ENCODE measurements at regions of chr15 and their contacts with region 1.

Region 1: DNA sequence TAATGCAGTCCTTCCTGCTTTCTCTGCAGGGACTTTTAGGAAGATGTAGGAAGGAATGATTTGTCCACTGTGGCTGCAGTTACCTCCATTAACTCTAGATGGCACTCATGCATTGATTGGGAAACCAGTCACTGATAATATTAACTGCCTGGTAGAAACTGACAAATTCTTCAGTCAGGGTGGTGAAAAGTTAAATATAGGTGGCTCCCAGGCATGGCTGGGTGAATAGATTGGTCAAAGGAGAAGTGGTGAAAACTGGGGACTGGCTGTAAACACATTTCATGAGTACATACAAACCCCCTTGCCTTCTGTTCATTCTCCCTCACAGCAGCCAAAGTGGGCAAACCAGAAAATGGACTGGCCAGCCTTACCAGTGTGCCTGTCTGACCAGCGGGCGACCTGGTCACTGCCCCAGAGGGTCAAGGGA is 333.4 kb downstream of the THSD4 start:
- DNase-seq: peak; percentile 48 to 61
- H3K4me3 ChIP-seq: no peak overlapping the region
- H3K27ac ChIP-seq: peak overlapping the region in 1 of 2 donors; percentile 50
- H3K4me1 ChIP-seq: no peaks in the 10 kb centered on the region
- H3K27me3 ChIP-seq: no peaks in the 10 kb centered on the region
- CTCF ChIP-seq: peak; percentile 87 to 97 (median 90)
- POLR2A ChIP-seq: no peak

Region 2: DNA sequence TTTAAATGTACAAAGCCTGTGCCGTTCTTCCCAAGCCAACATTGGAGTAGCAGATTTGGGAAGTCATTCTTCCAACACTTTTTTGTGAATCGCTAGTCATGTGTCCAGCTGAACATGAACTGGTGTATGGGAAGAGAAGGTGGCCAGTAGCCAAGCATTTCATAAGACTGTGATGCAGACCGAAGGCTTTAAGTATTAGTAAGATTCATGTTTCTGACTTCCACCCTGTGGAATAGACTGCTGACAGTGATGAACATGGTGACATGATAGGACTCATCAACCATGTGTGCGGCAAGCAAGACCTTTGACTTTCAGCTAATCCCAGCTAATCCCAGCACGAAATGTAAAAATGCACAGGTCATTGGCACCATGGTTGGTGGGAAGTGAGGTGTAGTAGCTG is 381.7 kb before region 1 on chr15:
- intact Hi-C with region 1: no loop called
- DNase-seq: peak; percentile 34 to 53
- H3K4me3 ChIP-seq: no peak overlapping the region
- H3K27ac ChIP-seq: no peak overlapping the region
- H3K4me1 ChIP-seq: no peaks in the 10 kb centered on the region
- H3K27me3 ChIP-seq: no peaks in the 10 kb centered on the region
- CTCF ChIP-seq: no peak
- POLR2A ChIP-seq: no peak

Region 3: DNA sequence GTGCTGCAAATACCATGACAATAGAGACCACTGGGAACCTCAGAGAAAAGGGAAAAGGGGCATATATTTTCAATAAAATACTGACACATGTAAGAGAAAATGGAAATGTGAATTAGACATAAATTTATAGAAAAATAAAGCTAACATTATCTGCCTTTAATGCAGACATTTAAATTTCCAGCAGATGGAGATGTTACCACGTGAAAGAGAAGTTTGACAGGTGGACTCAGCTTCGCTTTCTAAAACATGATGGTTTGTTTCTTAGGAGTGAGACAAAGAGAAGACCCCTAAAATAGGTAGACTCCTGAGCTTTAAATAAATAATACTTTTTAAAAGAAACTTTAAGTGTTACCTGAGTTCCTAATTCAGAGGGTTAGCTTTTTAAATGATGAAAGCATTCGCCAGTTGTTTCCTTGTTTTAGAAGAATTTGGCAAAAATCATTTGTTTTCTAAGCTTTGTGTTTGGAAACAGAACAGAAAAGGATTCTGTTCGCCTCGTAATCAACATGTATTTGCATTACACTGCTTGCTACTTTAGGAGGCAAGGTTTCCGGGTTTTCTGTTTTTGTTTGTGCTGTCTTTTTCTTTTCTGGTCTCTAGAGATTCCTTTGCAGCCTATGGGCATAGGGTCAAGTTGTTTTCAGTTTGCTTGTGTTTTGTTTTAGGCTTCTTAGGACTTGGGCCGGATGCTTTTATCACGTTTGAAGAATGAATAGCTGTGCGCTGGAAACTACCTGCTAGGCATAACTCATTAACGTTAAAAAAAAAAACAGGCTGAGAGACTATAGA is 62.1 kb before region 1 on chr15:
- intact Hi-C with region 1: loop called (anchors 10 kb)
- DNase-seq: no peak
- H3K4me3 ChIP-seq: peak overlapping the region in 1 of 2 donors; percentile 6
- H3K27ac ChIP-seq: peak overlapping the region; percentile 67 to 76
- H3K4me1 ChIP-seq: peaks cover 9 to 13% of the 10 kb centered on the region in 2 donors
- H3K27me3 ChIP-seq: no peaks in the 10 kb centered on the region
- CTCF ChIP-seq: peak; percentile 47 to 75 (median 67)
- POLR2A ChIP-seq: no peak

Region 4: GRCh38 chr15:71596672-71597071 is 148.0 kb after region 1 on chr15:
- intact Hi-C with region 1: no loop called
- DNase-seq: peak; percentile 47 to 56
- H3K4me3 ChIP-seq: no peak overlapping the region
- H3K27ac ChIP-seq: peak overlapping the region; percentile 40 to 63
- H3K4me1 ChIP-seq: peaks cover 0 to 8% of the 10 kb centered on the region in 2 donors
- H3K27me3 ChIP-seq: no peaks in the 10 kb centered on the region
- CTCF ChIP-seq: no peak
- POLR2A ChIP-seq: no peak

Region 5: GRCh38 chr15:71800835-71801745 is 352.4 kb after region 1 on chr15:
- intact Hi-C with region 1: loop called (anchors 10 kb)
- DNase-seq: peak in 1 of 2 donors; percentile 36
- H3K4me3 ChIP-seq: no peak overlapping the region
- H3K27ac ChIP-seq: no peak overlapping the region
- H3K4me1 ChIP-seq: no peaks in the 10 kb centered on the region
- H3K27me3 ChIP-seq: no peaks in the 10 kb centered on the region
- CTCF ChIP-seq: peak; percentile 86 to 96 (median 90)
- POLR2A ChIP-seq: no peak

Region 6: GRCh38 chr15:72155635-72156616 is 707.2 kb after region 1 on chr15:
- intact Hi-C with region 1: loop called (anchors 10 kb)
- DNase-seq: peak; percentile 86
- H3K4me3 ChIP-seq: peak overlapping the region; percentile 43 to 48
- H3K27ac ChIP-seq: peak overlapping the region; percentile 63 to 83
- H3K4me1 ChIP-seq: no peaks in the 10 kb centered on the region
- H3K27me3 ChIP-seq: no peaks in the 10 kb centered on the region
- CTCF ChIP-seq: peak; percentile 78 to 94 (median 87)
- POLR2A ChIP-seq: no peak

Measured in uterus (tissue), 4 donors.